ENCODE measurements at regions of chr4 and their contacts with region 1.

Region 1: GRCh38 chr4:140359562-140360427 is 13.7 kb upstream of the SCOC start:
- DNase-seq: peak; percentile 65 to 77 (median 70)
- H3K4me3 ChIP-seq: no peak overlapping the region
- H3K4me3 Mint-ChIP-seq: no peak overlapping the region
- H3K27ac ChIP-seq: no peak overlapping the region
- H3K27ac Mint-ChIP-seq: no peak overlapping the region
- H3K4me1 ChIP-seq: no peaks in the 10 kb centered on the region
- H3K4me1 Mint-ChIP-seq: peaks cover 0 to 4% (median 4%) of the 10 kb centered on the region in 4 donors
- H3K27me3 ChIP-seq: no peaks in the 10 kb centered on the region
- H3K27me3 Mint-ChIP-seq: peaks cover 2 to 7% of the 10 kb centered on the region in 2 donors

Region 2: DNA sequence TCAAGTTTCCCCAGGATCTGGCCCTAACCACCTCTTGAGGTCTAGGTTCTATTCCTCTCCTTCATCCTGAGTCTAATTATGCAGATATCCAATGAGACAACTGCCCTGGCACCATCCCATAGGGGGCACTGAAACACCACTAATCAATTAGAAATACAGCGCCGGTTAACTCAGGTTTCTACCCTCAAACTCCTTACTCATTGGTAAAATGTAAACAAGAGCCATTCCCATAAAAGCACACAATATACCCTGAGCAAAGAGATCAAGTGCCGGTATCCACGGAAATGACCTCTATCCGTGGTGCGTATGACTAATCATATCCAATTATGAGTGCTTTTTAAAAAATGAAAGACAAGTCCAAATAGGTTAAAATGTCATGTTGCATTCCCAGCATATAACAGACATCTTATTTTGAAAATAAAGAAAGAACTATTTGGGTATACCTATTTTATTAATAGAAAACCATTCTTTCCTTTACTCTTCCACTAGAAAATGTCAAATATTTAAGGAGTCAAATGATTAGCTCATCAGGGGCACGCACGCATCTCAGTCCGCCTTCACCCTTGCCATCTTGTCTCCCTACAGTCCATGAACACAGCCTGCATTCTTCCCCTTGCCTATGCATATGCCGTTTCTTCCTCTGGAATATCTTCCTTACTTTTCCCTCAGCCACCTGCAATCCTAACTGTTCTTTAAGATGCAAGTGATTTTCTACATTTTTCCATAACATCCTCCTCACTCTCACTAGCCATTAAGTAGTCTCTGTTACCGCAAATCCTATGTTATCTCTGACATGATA is 346.9 kb before region 1 on chr4:
- CTCF ChIA-PET with region 1: interaction called, 25 read pairs
- POLR2A ChIA-PET with region 1: no interaction called
- intact Hi-C with region 1: loop called (anchors 1 kb)
- DNase-seq: peak; percentile 56 to 64 (median 61)
- H3K4me3 ChIP-seq: no peak overlapping the region
- H3K4me3 Mint-ChIP-seq: no peak overlapping the region
- H3K27ac ChIP-seq: no peak overlapping the region
- H3K27ac Mint-ChIP-seq: no peak overlapping the region
- H3K4me1 ChIP-seq: no peaks in the 10 kb centered on the region
- H3K4me1 Mint-ChIP-seq: peaks cover 0 to 3% (median under 1%) of the 10 kb centered on the region in 4 donors
- H3K27me3 ChIP-seq: no peaks in the 10 kb centered on the region
- H3K27me3 Mint-ChIP-seq: peaks cover 6 to 14% of the 10 kb centered on the region in 2 donors

Region 3: GRCh38 chr4:140222171-140222570 is 137.6 kb before region 1 on chr4:
- CTCF ChIA-PET with region 1: no interaction called
- POLR2A ChIA-PET with region 1: no interaction called
- intact Hi-C with region 1: no loop called
- DNase-seq: no peak
- H3K4me3 ChIP-seq: no peak overlapping the region
- H3K4me3 Mint-ChIP-seq: no peak overlapping the region
- H3K27ac ChIP-seq: no peak overlapping the region
- H3K27ac Mint-ChIP-seq: no peak overlapping the region
- H3K4me1 ChIP-seq: no peaks in the 10 kb centered on the region
- H3K4me1 Mint-ChIP-seq: no peaks in the 10 kb centered on the region
- H3K27me3 ChIP-seq: no peaks in the 10 kb centered on the region
- H3K27me3 Mint-ChIP-seq: peaks cover 3 to 5% of the 10 kb centered on the region in 2 donors

Region 4: DNA sequence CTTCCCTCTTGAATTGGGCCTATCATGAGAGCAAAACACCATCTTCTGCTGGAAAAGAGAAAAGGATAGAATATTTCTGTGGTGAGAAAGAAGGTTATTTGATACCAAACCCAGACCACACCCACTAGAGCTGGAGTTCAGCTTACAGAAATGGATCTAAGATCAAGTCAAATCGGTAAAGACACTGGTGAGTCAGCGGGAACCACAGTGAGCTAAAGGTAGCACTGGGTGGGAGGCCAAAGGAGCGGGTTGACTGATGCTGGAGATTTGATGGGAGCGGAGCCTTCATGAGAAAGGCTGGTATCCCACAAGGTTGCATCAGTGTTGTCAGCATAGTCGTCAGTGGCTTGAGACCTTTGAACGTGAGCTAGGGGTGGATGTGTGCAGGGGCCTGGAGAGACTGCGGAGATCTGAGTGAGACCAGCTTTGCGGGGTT is 92.8 kb before region 1 on chr4:
- CTCF ChIA-PET with region 1: no interaction called
- POLR2A ChIA-PET with region 1: no interaction called
- intact Hi-C with region 1: no loop called
- DNase-seq: no peak
- H3K4me3 ChIP-seq: no peak overlapping the region
- H3K4me3 Mint-ChIP-seq: no peak overlapping the region
- H3K27ac ChIP-seq: no peak overlapping the region
- H3K27ac Mint-ChIP-seq: no peak overlapping the region
- H3K4me1 ChIP-seq: no peaks in the 10 kb centered on the region
- H3K4me1 Mint-ChIP-seq: no peaks in the 10 kb centered on the region
- H3K27me3 ChIP-seq: no peaks in the 10 kb centered on the region
- H3K27me3 Mint-ChIP-seq: peaks cover 1 to 14% of the 10 kb centered on the region in 2 donors

Region 5: DNA sequence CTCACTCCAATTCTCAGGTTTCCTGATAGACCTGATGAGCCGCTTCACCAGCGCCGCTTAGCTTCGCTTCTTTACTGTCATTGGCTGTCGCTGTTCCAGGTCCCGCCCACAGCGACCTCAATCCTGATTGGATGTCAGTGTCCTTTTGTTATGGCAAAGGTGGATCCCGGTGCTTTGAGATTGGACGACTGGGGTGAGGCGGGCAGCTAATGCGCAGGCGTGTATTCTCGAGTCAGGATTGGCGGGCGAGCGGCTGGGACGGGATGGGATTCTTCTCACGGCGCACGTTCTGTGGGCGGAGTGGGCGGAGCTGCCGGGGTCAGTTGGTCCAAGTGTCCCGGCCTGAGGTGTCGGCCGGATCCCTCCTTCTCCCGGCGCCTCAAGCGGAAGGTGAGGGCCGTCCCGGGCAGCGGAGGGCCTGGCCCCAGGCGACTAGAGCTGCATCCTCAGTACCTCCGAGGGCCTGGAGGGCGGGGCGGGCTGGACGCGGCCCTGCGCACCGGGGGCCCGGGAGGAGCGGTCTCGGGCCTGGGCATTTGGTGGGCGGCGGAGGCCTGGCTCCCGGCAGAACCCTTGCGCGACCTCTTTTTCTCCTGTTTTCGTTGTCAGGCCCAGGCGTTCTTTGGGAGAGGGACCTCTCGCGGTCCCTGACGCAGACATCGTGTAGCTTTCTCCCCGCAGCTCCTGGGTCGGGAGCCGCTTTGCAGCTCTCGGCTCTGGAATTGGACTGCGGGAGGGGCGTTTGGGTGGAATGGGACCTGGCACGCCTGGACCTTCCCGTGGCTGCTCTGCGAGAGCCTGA is 13.7 kb after region 1 on chr4 and contains the start of gene SCOC:
- CTCF ChIA-PET with region 1: interaction called, 119 read pairs
- POLR2A ChIA-PET with region 1: interaction called, 7 read pairs
- intact Hi-C with region 1: loop called (anchors 1 kb)
- DNase-seq: peak; percentile 95 to 99 (median 96)
- H3K4me3 ChIP-seq: peak within 1 kb of the TSS; percentile 72 to 75
- H3K4me3 Mint-ChIP-seq: peak within 1 kb of the TSS in 3 of 8 donors; percentile 83 to 90 (median 87)
- H3K27ac ChIP-seq: peak within 1 kb of the TSS; percentile 69
- H3K27ac Mint-ChIP-seq: peak within 1 kb of the TSS in 6 of 7 donors; percentile 47 to 87 (median 76)
- H3K4me1 ChIP-seq: peaks cover 23% of the 10 kb centered on the region
- H3K4me1 Mint-ChIP-seq: peaks cover 24 to 37% (median 28%) of the 10 kb centered on the region in 4 donors
- H3K27me3 ChIP-seq: no peaks in the 10 kb centered on the region
- H3K27me3 Mint-ChIP-seq: no peaks in the 10 kb centered on the region
- total RNA-seq, gene SCOC: 21.8 to 22.8 TPM

Region 6: GRCh38 chr4:140395668-140396067 is 35.9 kb after region 1 on chr4:
- CTCF ChIA-PET with region 1: interaction called, 10 read pairs
- POLR2A ChIA-PET with region 1: no interaction called
- intact Hi-C with region 1: no loop called
- DNase-seq: no peak
- H3K4me3 ChIP-seq: no peak overlapping the region
- H3K4me3 Mint-ChIP-seq: no peak overlapping the region
- H3K27ac ChIP-seq: no peak overlapping the region
- H3K27ac Mint-ChIP-seq: no peak overlapping the region
- H3K4me1 ChIP-seq: no peaks in the 10 kb centered on the region
- H3K4me1 Mint-ChIP-seq: no peaks in the 10 kb centered on the region
- H3K27me3 ChIP-seq: no peaks in the 10 kb centered on the region
- H3K27me3 Mint-ChIP-seq: peaks cover 8 to 13% of the 10 kb centered on the region in 2 donors

Region 7: GRCh38 chr4:140609548-140610425 is 250.0 kb after region 1 on chr4:
- CTCF ChIA-PET with region 1: interaction called, 19 read pairs
- POLR2A ChIA-PET with region 1: no interaction called
- intact Hi-C with region 1: no loop called
- DNase-seq: peak in 4 of 5 donors; percentile 8 to 34 (median 26)
- H3K4me3 ChIP-seq: no peak overlapping the region
- H3K4me3 Mint-ChIP-seq: no peak overlapping the region
- H3K27ac ChIP-seq: no peak overlapping the region
- H3K27ac Mint-ChIP-seq: no peak overlapping the region
- H3K4me1 ChIP-seq: no peaks in the 10 kb centered on the region
- H3K4me1 Mint-ChIP-seq: peaks cover 0 to 1% (median 0%) of the 10 kb centered on the region in 4 donors
- H3K27me3 ChIP-seq: no peaks in the 10 kb centered on the region
- H3K27me3 Mint-ChIP-seq: peaks cover 6 to 9% of the 10 kb centered on the region in 2 donors

Region 8: DNA sequence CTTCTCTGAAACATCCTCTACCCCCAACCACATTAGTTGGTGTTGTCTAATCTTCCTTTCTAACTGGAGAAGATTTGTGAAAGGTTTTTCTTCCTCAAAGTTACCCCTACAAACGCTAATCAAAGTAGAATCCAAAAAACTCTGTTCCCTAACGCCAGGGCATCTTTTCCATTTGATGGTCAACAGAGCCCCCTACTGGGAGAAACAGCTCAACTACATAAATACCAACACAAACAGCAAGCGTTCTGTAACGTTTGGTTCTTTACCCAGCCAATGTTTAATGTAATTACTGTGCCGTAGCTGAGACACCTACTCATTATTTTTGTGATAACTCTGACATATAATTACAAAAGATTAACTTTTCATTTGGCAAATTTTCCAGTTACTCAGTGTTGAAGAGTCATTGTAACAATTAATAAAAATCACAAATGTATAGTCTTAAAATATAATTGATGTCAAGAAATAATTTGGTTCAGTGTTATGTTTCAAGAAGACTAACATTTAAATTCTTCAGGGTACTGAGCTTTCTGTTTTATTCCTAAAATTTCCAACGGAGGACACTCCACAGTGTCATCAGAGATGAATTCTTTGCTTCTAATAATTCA is 491.3 kb after region 1 on chr4:
- CTCF ChIA-PET with region 1: interaction called, 4 read pairs
- POLR2A ChIA-PET with region 1: no interaction called
- intact Hi-C with region 1: loop called (anchors 2 kb)
- DNase-seq: peak in 4 of 5 donors; percentile 2 to 14 (median 5)
- H3K4me3 ChIP-seq: no peak overlapping the region
- H3K4me3 Mint-ChIP-seq: no peak overlapping the region
- H3K27ac ChIP-seq: no peak overlapping the region
- H3K27ac Mint-ChIP-seq: no peak overlapping the region
- H3K4me1 ChIP-seq: no peaks in the 10 kb centered on the region
- H3K4me1 Mint-ChIP-seq: no peaks in the 10 kb centered on the region
- H3K27me3 ChIP-seq: no peaks in the 10 kb centered on the region
- H3K27me3 Mint-ChIP-seq: peaks cover 7 to 20% of the 10 kb centered on the region in 2 donors

Region 9: GRCh38 chr4:141686146-141686775 is 1326.5 kb after region 1 on chr4:
- CTCF ChIA-PET with region 1: no interaction called
- POLR2A ChIA-PET with region 1: no interaction called
- intact Hi-C with region 1: no loop called
- DNase-seq: no peak
- H3K4me3 ChIP-seq: no peak overlapping the region
- H3K4me3 Mint-ChIP-seq: no peak overlapping the region
- H3K27ac ChIP-seq: no peak overlapping the region
- H3K27ac Mint-ChIP-seq: no peak overlapping the region
- H3K4me1 ChIP-seq: no peaks in the 10 kb centered on the region
- H3K4me1 Mint-ChIP-seq: peaks cover 0 to 1% (median 0%) of the 10 kb centered on the region in 4 donors
- H3K27me3 ChIP-seq: no peaks in the 10 kb centered on the region
- H3K27me3 Mint-ChIP-seq: no peaks in the 10 kb centered on the region